OCI-LY7 (cell line): ENCODE measurements at regions of chr2 and their contacts with region 1.

Region 1: DNA sequence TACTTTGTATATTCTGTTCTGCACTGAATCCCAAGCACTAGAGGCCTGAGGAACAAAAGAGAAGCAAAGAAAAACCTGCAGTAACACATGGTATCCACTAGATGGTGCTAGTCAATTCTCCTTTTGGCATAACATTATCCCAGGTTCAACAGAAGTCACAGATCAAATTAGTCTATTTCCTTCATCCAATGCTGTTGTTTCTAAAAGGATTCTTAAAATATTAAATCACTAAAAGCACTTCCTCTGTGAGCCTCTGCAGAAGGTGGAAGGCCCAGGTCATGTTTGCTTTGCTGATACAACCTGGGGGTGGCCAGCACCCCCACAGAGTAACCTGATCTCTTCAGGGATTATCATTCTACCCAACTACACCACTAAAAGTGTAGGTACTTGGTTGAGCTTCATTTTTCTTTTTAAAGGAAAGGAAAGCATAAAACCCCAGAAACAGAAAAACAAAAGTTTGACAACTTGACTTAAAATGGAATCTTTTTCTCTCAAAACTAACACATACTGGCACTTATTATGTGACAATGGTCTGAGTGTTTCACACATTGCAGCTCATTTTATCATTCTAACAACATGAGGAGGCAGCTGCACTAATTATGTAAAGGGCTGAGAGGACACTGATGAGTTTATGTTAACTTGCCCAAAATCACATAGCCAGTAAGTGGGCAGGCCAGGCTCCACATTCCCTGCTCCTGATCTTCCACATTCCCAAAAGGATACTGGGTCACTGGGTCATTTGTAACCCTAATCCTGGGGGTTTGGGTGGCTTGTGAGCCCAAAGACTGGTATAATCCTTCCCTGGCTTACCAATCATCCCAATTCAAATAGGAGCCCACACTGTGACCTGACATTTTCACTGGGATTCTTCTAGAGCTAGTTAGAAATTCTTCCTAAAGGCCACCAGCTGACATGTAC is 66.8 kb upstream of the DNER start:
- DNase-seq: peak; percentile 53
- H3K4me3 ChIP-seq: no peak overlapping the region
- H3K27ac ChIP-seq: no peak overlapping the region
- H3K4me1 ChIP-seq: peaks cover under 1% of the 10 kb centered on the region
- CTCF ChIP-seq: peak; percentile 97

Region 2: DNA sequence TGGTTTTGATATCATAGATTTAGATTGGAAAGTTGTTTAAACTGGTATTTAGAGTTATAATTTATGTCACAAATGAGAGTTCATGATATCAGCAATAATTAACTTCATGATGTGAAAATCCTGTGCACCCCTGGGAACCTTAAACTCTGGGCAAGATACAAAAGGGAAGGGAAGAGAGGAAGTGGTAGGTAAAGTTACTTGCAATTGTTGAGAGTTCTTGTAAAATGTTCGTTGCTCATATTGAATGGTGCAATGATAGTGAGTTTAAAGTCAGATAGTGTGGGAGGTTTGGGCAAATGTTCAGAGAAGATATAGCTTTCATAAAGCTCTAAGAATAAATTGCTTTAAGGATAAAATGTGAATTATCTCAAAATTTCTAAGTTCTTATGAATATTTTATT is 363.2 kb after region 1 on chr2:
- CTCF ChIA-PET with region 1: no interaction called
- POLR2A ChIA-PET with region 1: no interaction called
- intact Hi-C with region 1: loop called (anchors 10 kb)
- DNase-seq: no peak
- H3K4me3 ChIP-seq: no peak overlapping the region
- H3K27ac ChIP-seq: no peak overlapping the region
- H3K4me1 ChIP-seq: no peaks in the 10 kb centered on the region
- CTCF ChIP-seq: no peak